HEK293T (cell line): ENCODE measurements at regions of chr6 and their contacts with region 1.

Region 1: GRCh38 chr6:57316581-57317059 is 810 bp upstream of the PRIM2 start:
- DNase-seq: peak; percentile 79

Region 2: DNA sequence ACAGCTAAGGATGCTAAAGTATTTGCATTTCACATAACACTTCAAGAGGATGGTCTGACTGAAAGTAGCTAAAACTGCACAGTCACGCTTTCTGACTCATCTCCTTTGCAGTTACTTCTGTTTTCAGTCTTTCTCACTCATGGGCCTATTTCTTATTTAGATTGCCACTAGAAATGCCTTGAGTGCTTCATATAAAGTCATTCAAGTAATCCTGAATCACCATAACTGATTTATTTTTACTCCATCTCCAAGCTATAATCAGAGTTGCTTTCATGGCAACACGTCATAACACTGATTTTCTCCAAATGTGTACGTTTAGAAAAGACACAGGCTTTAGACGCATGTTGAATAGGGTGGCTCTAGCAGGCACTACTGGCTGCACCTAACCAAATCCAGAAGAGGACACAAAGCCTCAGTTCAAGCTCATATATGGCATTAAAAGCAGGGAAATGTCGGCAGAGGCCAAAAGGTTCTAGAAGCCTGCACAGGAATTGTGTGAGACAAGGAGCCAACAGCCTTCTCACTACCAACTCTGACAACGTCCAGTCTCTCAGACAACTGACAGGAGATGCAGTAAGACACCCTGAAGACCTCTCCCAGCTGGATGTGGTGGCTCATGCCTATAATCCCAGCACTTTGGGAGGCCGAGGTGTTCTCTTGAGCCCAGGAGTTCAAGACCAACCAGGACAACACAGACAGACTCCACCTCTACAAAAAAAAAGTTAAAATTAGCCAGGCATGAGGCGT is 425.8 kb before region 1 on chr6:
- CTCF ChIA-PET with region 1: no interaction called
- POLR2A ChIA-PET with region 1: no interaction called
- DNase-seq: no peak

Region 3: DNA sequence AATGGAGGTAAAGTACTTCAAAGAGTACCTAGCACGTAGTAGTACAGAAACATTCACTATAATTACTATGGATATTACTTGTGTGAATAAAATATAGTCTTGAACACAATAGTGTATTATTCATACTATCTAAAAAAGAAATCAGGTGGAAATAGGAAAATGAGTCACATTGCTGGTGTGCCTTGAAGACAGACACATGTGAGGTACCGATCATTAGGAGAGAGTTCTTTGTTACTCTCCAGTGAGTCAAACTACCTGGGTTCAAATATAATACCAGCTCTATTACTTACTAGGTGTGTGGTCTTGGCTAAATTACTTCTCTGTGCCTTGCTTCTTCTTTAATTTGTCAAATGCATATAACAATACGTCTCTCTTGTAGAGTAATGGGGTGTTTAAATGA is 412.6 kb before region 1 on chr6:
- CTCF ChIA-PET with region 1: interaction called, 18 read pairs
- POLR2A ChIA-PET with region 1: interaction called, 3 read pairs
- DNase-seq: no peak

Region 4: GRCh38 chr6:57267586-57268293 is 48.9 kb before region 1 on chr6:
- CTCF ChIA-PET with region 1: interaction called, 21 read pairs
- POLR2A ChIA-PET with region 1: interaction called, 3 read pairs
- DNase-seq: peak; percentile 48

Region 5: DNA sequence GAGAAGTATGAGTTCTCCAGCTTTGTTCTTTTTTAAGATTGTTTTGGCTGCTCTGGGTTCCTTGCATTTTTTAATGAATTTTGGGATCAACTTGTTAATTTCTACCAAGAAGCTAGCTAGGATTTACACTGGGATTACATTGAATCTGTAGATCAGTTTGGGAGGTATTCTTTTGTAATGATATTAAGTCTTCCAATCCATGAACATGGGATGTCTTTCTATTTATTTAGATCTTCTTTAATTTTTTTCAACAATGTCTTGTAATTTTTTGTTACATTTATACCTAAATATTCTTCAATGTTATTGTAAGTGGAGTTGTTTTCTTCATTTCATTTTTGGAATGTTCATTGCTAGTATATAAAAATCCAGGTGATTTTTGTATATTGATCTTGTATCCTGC is 13.3 kb after region 1 on chr6:
- CTCF ChIA-PET with region 1: no interaction called
- POLR2A ChIA-PET with region 1: no interaction called
- DNase-seq: no peak